ENCODE measurements at regions of chr16 and their contacts with region 1.

Region 1: DNA sequence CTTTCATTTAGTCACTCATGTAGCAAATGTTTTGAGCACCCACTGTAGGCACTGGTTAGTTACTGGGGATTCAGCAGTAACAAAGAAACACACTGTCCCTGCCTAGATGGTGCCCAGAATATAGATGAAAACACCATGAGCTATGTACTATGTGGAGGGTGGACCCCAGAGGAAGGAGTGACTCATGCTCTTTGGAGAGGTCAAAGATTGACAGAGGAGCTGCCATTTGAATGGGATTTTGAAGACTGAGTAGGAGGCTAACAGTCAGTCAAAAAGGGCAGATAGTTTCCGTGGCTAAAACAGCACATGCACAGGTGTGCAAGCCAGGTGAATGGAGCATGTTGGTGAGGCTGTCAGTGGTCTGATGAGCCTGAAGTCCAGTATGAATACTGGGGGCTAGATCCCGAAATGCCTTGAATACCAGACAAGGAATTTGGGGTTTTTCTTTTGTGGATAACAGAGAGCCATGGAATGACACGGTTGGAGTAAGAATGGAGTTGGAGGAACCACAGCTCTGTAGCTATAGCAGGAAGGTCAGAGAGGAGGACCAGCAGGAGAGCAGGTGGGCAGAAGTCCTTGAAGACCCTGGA is 6.1 kb downstream of the IL21R start:
- DNase-seq: peak; percentile 57
- CTCF ChIP-seq: no peak

Region 2: DNA sequence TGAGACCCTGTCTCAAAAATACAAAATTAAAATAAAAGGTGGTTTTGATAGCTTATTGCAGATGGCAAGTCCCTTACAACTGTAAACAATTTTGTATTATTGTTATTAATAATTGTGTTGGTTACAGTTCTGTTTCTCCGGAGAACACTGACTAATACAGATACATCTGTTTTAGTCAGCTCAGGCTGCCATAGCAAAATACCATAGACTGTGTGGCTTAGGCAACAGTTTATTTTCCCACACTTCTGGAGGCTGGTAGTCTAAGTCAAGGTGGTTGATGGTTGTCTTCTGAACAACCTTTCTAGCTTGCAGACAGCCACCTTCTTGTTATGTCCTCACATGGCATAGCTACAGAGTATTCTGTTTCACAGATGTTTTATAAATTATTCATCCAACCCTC is 20.4 kb before region 1 on chr16:
- CTCF ChIA-PET with region 1: interaction called, 23 read pairs
- POLR2A ChIA-PET with region 1: interaction called, 9 read pairs
- DNase-seq: no peak
- CTCF ChIP-seq: no peak

Region 3: GRCh38 chr16:27426423-27427408 is 18.6 kb after region 1 on chr16:
- CTCF ChIA-PET with region 1: interaction called, 11 read pairs
- POLR2A ChIA-PET with region 1: interaction called, 32 read pairs
- DNase-seq: peak; percentile 81
- CTCF ChIP-seq: no peak

Region 4: GRCh38 chr16:27449434-27450195 is 41.5 kb after region 1 on chr16:
- CTCF ChIA-PET with region 1: interaction called, 4 read pairs
- POLR2A ChIA-PET with region 1: interaction called, 11 read pairs
- DNase-seq: peak; percentile 86
- CTCF ChIP-seq: no peak